Vagina (tissue), 2 donors: ENCODE measurements at regions of chr16 and their contacts with region 1.

Region 1: DNA sequence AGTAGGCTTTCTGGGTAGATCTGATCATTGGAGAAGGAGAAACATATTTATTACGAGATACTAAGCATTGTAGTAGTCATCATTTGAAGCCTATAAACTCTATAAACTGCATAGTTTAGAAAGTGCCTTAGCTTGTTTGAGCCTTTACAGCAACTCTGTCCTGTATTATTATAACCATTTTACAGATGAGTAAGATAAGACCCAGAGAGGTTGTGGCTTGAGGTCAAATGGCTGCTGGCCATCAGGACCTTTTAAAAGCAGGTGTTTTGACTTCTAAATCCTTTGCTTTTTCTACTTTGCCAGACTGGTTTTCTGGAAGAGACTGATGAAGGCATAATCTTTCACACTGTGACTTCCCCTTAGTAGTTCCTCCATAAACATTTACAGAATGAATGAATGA is 7.1 kb downstream of the USP10 start:
- DNase-seq: peak in 1 of 2 donors; percentile 1
- H3K4me3 ChIP-seq: no peak overlapping the region
- H3K27ac ChIP-seq: no peak overlapping the region
- H3K4me1 ChIP-seq: peaks cover 55% of the 10 kb centered on the region
- H3K27me3 ChIP-seq: no peaks in the 10 kb centered on the region
- CTCF ChIP-seq: no peak
- POLR2A ChIP-seq: no peak

Region 2: DNA sequence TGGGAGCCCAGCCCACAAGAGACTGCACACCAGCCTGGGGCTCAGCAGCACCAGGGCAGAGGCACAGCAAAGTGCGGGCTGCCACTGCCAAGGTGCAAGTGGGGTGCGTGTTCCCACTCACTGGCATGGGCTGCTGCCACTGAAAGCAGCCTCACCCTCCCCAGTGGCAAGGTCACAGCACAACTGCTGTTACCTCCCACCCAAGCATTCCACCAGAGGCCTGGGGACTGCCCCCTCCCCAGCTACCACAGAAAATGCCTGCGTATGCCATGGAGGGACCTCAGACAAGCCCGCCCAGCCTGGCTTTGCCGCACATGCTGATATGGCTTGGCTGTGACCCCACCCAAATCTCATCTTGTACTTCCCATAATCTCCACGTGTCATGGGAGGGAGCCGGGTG is 235.6 kb before region 1 on chr16:
- intact Hi-C with region 1: no loop called
- DNase-seq: peak in 1 of 2 donors; percentile 43
- H3K4me3 ChIP-seq: no peak overlapping the region
- H3K27ac ChIP-seq: no peak overlapping the region
- H3K4me1 ChIP-seq: no peaks in the 10 kb centered on the region
- H3K27me3 ChIP-seq: no peaks in the 10 kb centered on the region
- CTCF ChIP-seq: no peak
- POLR2A ChIP-seq: no peak

Region 3: DNA sequence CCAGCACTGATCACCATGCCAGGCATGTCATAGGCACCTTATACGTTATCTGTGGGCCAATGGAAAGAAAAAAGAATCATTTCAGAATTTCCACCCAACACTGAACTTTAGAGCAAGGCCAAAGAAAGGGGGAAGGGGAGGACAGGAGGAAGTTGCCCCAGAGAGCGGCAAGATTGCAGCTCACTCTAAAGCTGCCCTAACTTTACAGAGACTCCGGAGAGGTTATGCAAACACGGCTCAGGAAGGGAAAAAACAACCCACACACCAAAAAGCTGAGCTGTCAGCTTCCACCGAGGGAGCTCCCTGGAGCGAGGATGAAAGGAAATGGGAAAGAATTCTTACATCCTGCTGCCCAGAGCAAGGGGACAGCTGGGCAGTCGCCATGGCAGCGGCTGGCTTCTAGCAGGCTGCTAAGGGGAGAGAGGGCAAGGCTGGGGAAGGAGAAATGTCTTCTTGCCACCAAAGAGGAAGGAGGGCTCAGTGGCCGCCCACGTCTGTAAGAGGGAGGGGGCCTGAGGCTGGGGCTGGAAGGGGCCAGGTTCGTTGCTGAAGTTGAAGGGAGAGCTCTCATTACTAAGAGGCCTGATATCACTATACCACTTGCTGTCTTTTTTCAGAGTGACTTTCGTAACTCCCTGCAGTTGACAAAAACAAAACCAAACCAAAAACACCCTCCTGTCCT is 107.2 kb before region 1 on chr16:
- intact Hi-C with region 1: no loop called
- DNase-seq: no peak
- H3K4me3 ChIP-seq: peak overlapping the region in 1 of 2 donors; percentile 12
- H3K27ac ChIP-seq: peak overlapping the region; percentile 54
- H3K4me1 ChIP-seq: peaks cover 26% of the 10 kb centered on the region
- H3K27me3 ChIP-seq: no peaks in the 10 kb centered on the region
- CTCF ChIP-seq: no peak
- POLR2A ChIP-seq: no peak

Region 4: DNA sequence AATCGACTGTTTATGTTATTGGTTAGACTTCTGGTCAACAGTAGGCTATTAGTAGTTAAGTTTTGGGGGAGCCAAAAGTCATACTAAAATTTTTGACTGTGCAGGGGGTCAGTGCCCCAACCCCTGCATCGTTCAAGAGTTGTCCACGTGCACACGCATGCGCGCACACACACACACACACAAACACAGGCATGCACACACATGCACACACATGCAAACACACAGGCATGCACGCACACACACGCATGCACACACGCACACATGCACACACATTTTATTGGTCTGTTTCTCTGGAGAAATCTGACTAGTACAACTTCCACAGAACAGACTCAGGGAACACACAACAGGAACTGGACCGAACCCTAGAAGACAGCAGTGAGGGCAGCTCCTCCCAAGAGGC is 31.5 kb before region 1 on chr16:
- intact Hi-C with region 1: loop called (anchors 2 kb)
- DNase-seq: no peak
- H3K4me3 ChIP-seq: no peak overlapping the region
- H3K27ac ChIP-seq: no peak overlapping the region
- H3K4me1 ChIP-seq: no peaks in the 10 kb centered on the region
- H3K27me3 ChIP-seq: no peaks in the 10 kb centered on the region
- CTCF ChIP-seq: no peak
- POLR2A ChIP-seq: no peak

Region 5: GRCh38 chr16:84810518-84811273 is 103.8 kb after region 1 on chr16:
- intact Hi-C with region 1: no loop called
- DNase-seq: no peak
- H3K4me3 ChIP-seq: no peak overlapping the region
- H3K27ac ChIP-seq: peak overlapping the region; percentile 69
- H3K4me1 ChIP-seq: peaks cover 7% of the 10 kb centered on the region
- H3K27me3 ChIP-seq: no peaks in the 10 kb centered on the region
- CTCF ChIP-seq: no peak
- POLR2A ChIP-seq: no peak

Region 6: GRCh38 chr16:86334079-86334635 is 1627.3 kb after region 1 on chr16:
- intact Hi-C with region 1: no loop called
- DNase-seq: no peak
- H3K4me3 ChIP-seq: no peak overlapping the region
- H3K27ac ChIP-seq: no peak overlapping the region
- H3K4me1 ChIP-seq: no peaks in the 10 kb centered on the region
- H3K27me3 ChIP-seq: no peaks in the 10 kb centered on the region
- CTCF ChIP-seq: no peak
- POLR2A ChIP-seq: no peak